Activated CD8-positive, alpha-beta T cell treated with anti-CD3 and anti-CD28 coated beads for 36 hours (primary cell): ENCODE measurements at regions of chr18 and their contacts with region 1.

Region 1: DNA sequence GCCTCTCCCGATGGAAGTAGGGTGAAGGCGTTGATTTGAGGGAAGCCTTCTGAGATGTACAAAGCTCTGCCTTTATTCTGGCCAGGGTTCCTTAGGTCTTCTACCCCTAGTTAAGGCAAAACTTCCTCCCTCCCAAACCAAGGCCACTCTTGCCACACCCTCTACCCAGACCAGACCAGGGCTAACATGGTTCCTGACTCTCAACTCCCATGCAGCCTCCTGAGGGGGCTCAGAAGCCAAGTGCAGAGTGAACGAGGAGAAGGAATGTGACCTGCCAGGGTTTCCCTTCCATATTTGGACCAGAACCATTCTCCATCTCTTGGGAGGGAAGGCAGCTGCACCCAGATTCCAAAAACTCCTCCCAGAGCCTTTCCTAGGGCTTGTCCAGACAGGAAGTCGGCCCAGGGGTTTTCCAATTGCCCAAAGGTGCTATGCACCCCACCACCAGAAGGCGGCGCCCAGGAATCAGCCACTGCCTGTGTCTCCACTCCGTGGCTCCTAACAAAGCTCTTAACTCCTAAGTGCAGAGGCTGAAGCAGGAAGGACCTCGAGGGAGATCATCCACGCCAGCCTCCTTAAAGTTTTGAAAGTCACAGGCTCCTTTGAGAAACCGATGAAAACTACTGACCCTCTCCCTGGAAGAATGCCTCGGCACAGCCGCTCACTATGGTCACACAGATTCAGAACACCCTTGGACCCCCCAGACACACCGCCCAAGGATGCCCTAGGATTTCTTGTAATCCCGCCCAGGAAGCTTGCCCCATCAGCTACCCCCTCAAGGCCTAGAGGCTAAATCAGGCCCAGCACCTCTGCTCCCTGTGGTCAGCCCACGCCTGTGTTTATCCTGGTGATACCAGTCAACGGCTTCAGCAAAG is 157.8 kb downstream of the SMAD2 start:
- DNase-seq: peak; percentile 74
- ATAC-seq: peak; percentile 84
- H3K4me3 Mint-ChIP-seq: no peak overlapping the region
- H3K27ac Mint-ChIP-seq: no peak overlapping the region
- H3K4me1 Mint-ChIP-seq: peaks cover 2% of the 10 kb centered on the region
- H3K27me3 Mint-ChIP-seq: peaks cover 3% of the 10 kb centered on the region
- CTCF ChIP-seq: peak; percentile 84

Region 2: DNA sequence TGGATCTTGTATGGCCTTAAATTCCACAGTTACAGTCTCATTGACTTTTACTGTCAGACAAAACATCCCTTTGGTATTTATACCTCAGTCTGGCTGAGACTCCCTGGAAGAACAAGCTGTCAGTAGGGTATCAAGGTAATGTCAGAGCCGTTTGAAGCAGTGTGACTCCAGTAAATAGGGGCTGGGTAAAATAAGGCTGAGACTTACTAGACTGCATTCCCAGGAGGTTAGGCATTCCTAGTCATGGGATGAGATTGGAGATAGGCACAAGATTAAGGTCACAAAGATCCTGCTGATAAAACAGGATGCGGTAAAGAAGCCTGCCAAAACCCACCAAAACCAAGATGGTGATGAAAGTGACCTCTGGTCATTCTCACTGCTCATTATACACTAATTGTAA is 301.7 kb before region 1 on chr18:
- CTCF ChIA-PET with region 1: no interaction called
- POLR2A ChIA-PET with region 1: no interaction called
- intact Hi-C with region 1: no loop called
- DNase-seq: no peak
- ATAC-seq: no peak
- H3K4me3 Mint-ChIP-seq: no peak overlapping the region
- H3K27ac Mint-ChIP-seq: no peak overlapping the region
- H3K4me1 Mint-ChIP-seq: no peaks in the 10 kb centered on the region
- H3K27me3 Mint-ChIP-seq: peaks cover 2% of the 10 kb centered on the region
- CTCF ChIP-seq: no peak

Region 3: GRCh38 chr18:47756364-47757016 is 16.1 kb before region 1 on chr18:
- CTCF ChIA-PET with region 1: interaction called, 33 read pairs
- POLR2A ChIA-PET with region 1: no interaction called
- intact Hi-C with region 1: no loop called
- DNase-seq: peak; percentile 70
- ATAC-seq: no peak
- H3K4me3 Mint-ChIP-seq: no peak overlapping the region
- H3K27ac Mint-ChIP-seq: no peak overlapping the region
- H3K4me1 Mint-ChIP-seq: no peaks in the 10 kb centered on the region
- H3K27me3 Mint-ChIP-seq: peaks cover 19% of the 10 kb centered on the region
- CTCF ChIP-seq: peak; percentile 74

Region 4: GRCh38 chr18:47800248-47800647 is 27.6 kb after region 1 on chr18:
- CTCF ChIA-PET with region 1: no interaction called
- POLR2A ChIA-PET with region 1: no interaction called
- intact Hi-C with region 1: no loop called
- DNase-seq: no peak
- ATAC-seq: no peak
- H3K4me3 Mint-ChIP-seq: no peak overlapping the region
- H3K27ac Mint-ChIP-seq: no peak overlapping the region
- H3K4me1 Mint-ChIP-seq: no peaks in the 10 kb centered on the region
- H3K27me3 Mint-ChIP-seq: peaks cover 9% of the 10 kb centered on the region
- CTCF ChIP-seq: no peak

Region 5: GRCh38 chr18:47929681-47930198 is 157.1 kb after region 1 on chr18:
- CTCF ChIA-PET with region 1: no interaction called
- POLR2A ChIA-PET with region 1: no interaction called
- intact Hi-C with region 1: loop called (anchors 10 kb)
- DNase-seq: no peak
- ATAC-seq: peak; percentile 3
- H3K4me3 Mint-ChIP-seq: peak overlapping the region; percentile 95
- H3K27ac Mint-ChIP-seq: peak overlapping the region; percentile 96
- H3K4me1 Mint-ChIP-seq: peaks cover 48% of the 10 kb centered on the region
- H3K27me3 Mint-ChIP-seq: no peaks in the 10 kb centered on the region
- CTCF ChIP-seq: no peak

Region 6: DNA sequence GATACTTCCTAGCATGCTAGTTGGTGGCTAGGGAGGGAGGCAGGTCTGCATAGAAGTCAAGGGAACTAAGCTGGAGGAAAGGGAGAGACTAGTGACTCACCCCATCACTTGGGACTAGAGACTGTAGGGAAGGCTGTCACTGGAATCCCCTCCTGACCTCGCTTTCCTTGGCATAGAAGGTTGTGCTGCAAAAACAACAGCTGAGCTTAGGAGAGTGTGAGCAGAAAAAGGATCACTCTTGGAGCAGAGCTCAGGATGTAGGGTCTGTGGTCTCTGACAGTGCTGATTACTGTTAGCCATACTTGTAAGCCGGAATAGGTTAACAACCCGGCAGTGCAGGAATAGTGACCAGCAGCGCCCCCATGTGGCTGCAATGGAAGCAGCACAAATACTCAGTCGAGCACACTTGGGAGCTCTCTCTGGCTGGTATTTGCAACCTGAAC is 224.7 kb after region 1 on chr18:
- CTCF ChIA-PET with region 1: interaction called, 38 read pairs
- POLR2A ChIA-PET with region 1: no interaction called
- intact Hi-C with region 1: no loop called
- DNase-seq: peak; percentile 62
- ATAC-seq: peak; percentile 49
- H3K4me3 Mint-ChIP-seq: no peak overlapping the region
- H3K27ac Mint-ChIP-seq: no peak overlapping the region
- H3K4me1 Mint-ChIP-seq: no peaks in the 10 kb centered on the region
- H3K27me3 Mint-ChIP-seq: no peaks in the 10 kb centered on the region
- CTCF ChIP-seq: peak; percentile 73

Region 7: DNA sequence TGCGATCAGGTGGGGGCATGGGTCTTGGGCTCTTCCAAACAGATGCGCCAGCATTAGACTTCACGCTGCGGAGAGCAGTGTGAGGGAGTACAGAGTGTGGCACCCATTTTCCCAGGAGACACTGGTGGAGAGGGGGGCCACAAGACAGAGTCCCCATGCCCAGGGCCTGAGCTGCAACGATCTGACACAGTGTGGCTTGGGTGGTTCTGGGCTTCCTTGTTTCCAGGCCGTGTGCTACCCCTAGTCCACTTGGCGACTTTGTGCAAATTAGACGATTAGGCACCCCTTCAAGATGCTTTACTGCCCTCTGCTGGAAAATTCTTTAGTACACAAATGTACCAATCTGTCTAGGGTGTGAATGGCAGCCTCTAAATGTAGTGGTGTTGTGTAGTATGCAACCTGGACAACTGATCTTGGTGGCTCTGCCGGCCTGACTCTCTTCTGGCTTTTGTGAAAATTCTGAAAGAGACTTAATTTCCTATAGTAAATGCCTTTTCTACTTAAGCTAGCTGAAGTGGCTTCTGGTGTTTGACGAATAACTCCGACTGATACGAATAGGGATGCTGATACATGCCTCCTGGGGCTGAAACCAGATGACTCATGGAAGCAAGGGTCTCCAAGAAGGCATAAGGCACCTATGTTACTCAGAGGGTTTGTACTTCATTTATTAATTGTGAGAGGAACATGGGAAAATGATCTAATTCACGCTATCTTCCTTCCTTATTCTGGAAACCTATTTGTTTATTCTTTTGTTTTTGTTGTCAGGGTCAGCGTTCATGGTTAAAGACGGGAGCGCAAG is 250.1 kb after region 1 on chr18:
- CTCF ChIA-PET with region 1: interaction called, 17 read pairs
- POLR2A ChIA-PET with region 1: no interaction called
- intact Hi-C with region 1: loop called (anchors 1 kb)
- DNase-seq: peak; percentile 12
- ATAC-seq: peak; percentile 78
- H3K4me3 Mint-ChIP-seq: no peak overlapping the region
- H3K27ac Mint-ChIP-seq: no peak overlapping the region
- H3K4me1 Mint-ChIP-seq: no peaks in the 10 kb centered on the region
- H3K27me3 Mint-ChIP-seq: peaks cover 11% of the 10 kb centered on the region
- CTCF ChIP-seq: peak; percentile 70

Region 8: GRCh38 chr18:48030616-48031480 is 258.2 kb after region 1 on chr18:
- CTCF ChIA-PET with region 1: interaction called, 10 read pairs
- POLR2A ChIA-PET with region 1: no interaction called
- intact Hi-C with region 1: no loop called
- DNase-seq: peak; percentile 27
- ATAC-seq: no peak
- H3K4me3 Mint-ChIP-seq: no peak overlapping the region
- H3K27ac Mint-ChIP-seq: no peak overlapping the region
- H3K4me1 Mint-ChIP-seq: no peaks in the 10 kb centered on the region
- H3K27me3 Mint-ChIP-seq: no peaks in the 10 kb centered on the region
- CTCF ChIP-seq: peak; percentile 43